ENCODE measurements at regions of chr13 and their contacts with region 1.

Region 1: DNA sequence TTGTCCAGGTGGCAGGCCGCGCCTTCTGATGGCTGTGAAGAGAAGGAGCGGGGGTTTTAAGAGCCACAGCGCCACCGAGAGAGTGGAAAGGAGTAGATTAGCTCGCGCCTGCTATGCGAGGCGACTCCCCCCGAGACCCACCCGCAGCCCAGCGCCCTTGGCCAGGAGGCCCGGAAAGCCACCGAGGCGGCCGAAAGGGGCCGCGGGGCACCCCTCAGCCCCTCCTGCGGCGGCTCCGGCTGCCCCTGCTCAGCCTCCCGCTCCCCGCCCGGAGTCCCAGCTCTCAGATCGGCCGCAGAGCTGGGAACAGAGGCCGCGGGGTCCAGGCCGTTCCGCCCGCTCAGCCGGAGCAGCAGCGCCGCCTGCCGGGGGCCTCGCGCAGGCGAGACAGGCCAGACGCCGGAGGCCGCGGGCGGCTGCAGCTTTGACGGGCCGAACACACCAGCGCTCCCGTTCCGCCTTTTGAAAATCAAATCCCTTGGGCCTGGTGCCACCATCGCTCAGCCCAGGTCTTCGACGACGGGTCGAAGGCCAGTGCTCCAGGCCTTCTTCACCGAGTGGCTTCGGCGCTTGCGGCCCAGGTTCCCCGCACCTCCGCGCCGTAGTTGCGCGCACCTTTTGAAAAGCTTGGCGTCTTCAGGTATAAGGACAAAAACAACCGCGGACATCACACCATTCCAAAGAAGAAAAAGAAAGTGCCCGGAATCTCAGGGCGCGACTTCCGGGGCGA is 15.3 kb downstream of the CDX2 start:
- DNase-seq: peak; percentile 81 to 98 (median 92)
- ATAC-seq: peak; percentile 85 to 95 (median 90)
- H3K4me3 ChIP-seq: peak overlapping the region; percentile 35 to 62 (median 49)
- H3K27ac ChIP-seq: peak overlapping the region; percentile 94 to 100 (median 98)
- H3K4me1 ChIP-seq: peaks cover 12 to 22% (median 19%) of the 10 kb centered on the region in 3 donors
- H3K27me3 ChIP-seq: no peaks in the 10 kb centered on the region
- CTCF ChIP-seq: peak; percentile 89 to 96 (median 92)

Region 2: GRCh38 chr13:27826379-27827353 is 127.2 kb before region 1 on chr13:
- intact Hi-C with region 1: loop called in 1 of 3 experiments (anchors 10 kb)
- DNase-seq: peak; percentile 75 to 93 (median 84)
- ATAC-seq: peak; percentile 89 to 96 (median 94)
- H3K4me3 ChIP-seq: peak overlapping the region in 2 of 4 donors; percentile 16 to 36
- H3K27ac ChIP-seq: peak overlapping the region in 1 of 4 donors; percentile 13
- H3K4me1 ChIP-seq: peaks cover 0 to 4% (median 4%) of the 10 kb centered on the region in 3 donors
- H3K27me3 ChIP-seq: peaks cover 0 to 13% (median 8%) of the 10 kb centered on the region in 4 donors
- CTCF ChIP-seq: peak; percentile 84 to 96 (median 89)

Region 3: GRCh38 chr13:27868641-27869435 is 85.0 kb before region 1 on chr13:
- intact Hi-C with region 1: loop called in 1 of 3 experiments (anchors 10 kb)
- DNase-seq: peak in 1 of 6 donors; percentile 21
- ATAC-seq: peak; percentile 88 to 91 (median 90)
- H3K4me3 ChIP-seq: peak overlapping the region in 2 of 4 donors; percentile 5 to 21
- H3K27ac ChIP-seq: peak overlapping the region in 3 of 4 donors; percentile 11 to 73 (median 68)
- H3K4me1 ChIP-seq: peaks cover 0 to 16% (median 16%) of the 10 kb centered on the region in 3 donors
- H3K27me3 ChIP-seq: no peaks in the 10 kb centered on the region
- CTCF ChIP-seq: peak; percentile 13 to 49 (median 36)

Measured in pancreas (tissue), 10 donors.